Panc1 (cell line): ENCODE measurements at regions of chr20 and their contacts with region 1.

Region 1: GRCh38 chr20:9978397-9979004 is 56.3 kb upstream of the ANKEF1 start:
- DNase-seq: peak; percentile 84
- ATAC-seq: peak; percentile 95
- H3K4me3 ChIP-seq: no peak overlapping the region
- H3K27ac ChIP-seq: no peak overlapping the region
- H3K4me1 ChIP-seq: no peaks in the 10 kb centered on the region
- H3K27me3 ChIP-seq: no peaks in the 10 kb centered on the region
- CTCF ChIP-seq: peak; percentile 70

Region 2: DNA sequence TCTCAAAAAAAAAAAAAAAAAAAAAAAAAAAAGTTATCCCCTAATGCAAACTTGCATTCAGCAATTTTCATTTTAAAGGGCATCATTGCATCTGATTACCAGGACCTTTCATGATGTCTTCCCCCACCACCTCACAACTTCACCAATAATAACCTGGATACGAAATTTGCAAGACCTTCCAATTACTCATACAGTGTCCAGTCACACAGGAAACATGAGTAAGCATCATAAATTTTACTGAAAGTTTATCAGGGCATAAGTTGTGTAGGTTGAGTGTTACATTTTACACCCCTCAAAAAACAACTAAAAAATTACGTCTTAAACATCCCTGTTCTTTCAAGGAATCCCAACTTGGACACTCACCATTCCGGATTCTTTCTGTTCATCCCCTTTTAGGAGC is 22.9 kb before region 1 on chr20:
- CTCF ChIA-PET with region 1: no interaction called
- POLR2A ChIA-PET with region 1: no interaction called
- in situ Hi-C with region 1: no loop called
- intact Hi-C with region 1: no loop called
- DNase-seq: no peak
- ATAC-seq: no peak
- H3K4me3 ChIP-seq: no peak overlapping the region
- H3K27ac ChIP-seq: no peak overlapping the region
- H3K4me1 ChIP-seq: no peaks in the 10 kb centered on the region
- H3K27me3 ChIP-seq: no peaks in the 10 kb centered on the region
- CTCF ChIP-seq: no peak

Region 3: DNA sequence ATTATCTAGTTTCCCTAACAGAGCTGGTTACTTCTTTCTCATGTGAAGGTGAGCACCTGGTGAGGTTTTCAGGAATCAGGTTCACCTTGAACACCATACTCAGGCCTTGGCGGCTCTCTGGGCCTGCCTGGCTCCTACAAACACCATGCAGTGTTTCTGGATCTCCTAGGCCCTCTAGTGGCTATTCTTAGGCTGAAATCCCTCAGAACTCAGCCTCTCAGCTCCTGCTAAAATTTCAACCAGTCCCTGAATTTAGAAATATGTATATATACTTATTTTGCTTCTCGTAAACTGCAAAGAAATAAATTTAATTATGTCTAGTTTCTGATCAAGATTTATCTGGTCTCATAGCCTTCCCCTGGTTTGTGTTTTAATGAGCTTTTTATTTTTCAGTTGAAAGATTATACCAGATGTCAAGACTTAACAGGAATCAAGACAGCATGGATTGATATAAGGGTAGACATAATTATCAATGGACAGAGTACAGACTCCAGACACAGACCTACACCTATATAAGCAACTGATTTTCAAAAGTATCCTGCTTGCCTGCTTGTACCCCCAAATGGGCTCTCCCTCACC is 112.2 kb after region 1 on chr20:
- CTCF ChIA-PET with region 1: interaction called, 8 read pairs
- POLR2A ChIA-PET with region 1: no interaction called
- in situ Hi-C with region 1: no loop called
- intact Hi-C with region 1: loop called (anchors 1 kb)
- DNase-seq: peak; percentile 48
- ATAC-seq: peak; percentile 85
- H3K4me3 ChIP-seq: no peak overlapping the region
- H3K27ac ChIP-seq: no peak overlapping the region
- H3K4me1 ChIP-seq: peaks cover 4% of the 10 kb centered on the region; the same call in 1 of the 2 replicates
- H3K27me3 ChIP-seq: no peaks in the 10 kb centered on the region
- CTCF ChIP-seq: peak; percentile 86

Region 4: DNA sequence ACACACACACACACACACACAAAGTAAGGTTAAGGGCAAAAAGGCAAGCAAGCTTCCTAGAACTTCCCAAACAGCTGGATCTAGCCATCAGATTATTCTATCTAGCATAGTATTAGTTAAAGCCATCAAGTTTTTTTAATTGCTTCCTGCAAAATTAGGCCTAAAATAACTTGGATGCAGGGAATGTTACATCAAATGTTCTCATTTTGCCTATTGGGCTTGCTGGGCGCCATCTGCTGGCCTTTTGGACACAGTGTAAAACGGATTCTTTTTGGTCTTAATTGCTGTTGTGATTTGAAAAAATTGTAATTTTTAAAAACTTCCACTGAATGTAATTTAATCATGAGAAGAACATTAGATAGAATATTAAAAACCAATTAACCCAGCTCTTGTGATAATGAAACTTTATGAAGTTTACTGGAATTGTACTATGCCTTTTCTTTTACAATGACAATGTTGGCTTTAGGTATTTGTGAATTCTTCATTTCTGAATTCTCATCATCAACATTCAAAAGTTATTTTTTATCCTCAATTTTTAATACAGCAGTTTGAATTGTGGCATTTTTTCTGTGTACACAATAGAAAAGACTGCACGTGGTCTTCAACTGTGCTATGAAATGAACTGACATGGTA is 448.7 kb after region 1 on chr20:
- CTCF ChIA-PET with region 1: no interaction called
- POLR2A ChIA-PET with region 1: no interaction called
- in situ Hi-C with region 1: no loop called
- intact Hi-C with region 1: loop called (anchors 2 kb)
- DNase-seq: no peak
- ATAC-seq: peak; percentile 72; the same call in 1 of the 2 replicates
- H3K4me3 ChIP-seq: no peak overlapping the region
- H3K27ac ChIP-seq: no peak overlapping the region
- H3K4me1 ChIP-seq: 0 out of 2 replicates have a peak, but pooled peaks cover 4% of the 10 kb centered on the region
- H3K27me3 ChIP-seq: no peaks in the 10 kb centered on the region
- CTCF ChIP-seq: peak; percentile 84